Heart left ventricle (tissue), 16 donors: ENCODE measurements at regions of chr3 and their contacts with region 1.

Region 1: DNA sequence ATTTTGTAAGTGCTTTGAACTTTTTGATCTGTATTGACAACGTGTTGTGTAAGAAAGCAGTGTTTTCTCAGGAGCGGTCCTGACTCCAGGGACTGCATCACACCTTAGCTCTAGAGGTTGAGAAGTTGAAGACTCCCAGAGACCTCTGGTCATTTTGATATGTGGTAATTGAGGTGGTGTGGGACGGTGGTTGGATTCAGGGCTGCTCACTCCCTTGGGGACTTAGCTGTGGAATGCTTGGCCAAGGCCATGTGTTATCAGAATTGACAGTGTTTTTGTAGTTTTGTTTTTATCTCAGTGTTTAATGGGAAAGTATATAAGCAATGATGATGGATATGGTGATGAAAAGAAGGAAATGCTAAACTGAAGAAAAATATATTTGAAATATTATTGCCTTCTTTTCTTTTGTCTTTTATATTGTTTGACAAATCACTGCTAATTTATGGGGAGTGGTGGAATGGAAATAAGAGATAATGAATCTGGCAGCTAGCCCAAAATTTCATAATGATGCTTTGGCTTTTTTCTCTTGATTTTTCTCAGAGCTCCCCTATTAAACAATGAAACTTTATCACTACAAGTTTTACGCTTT is 16.0 kb downstream of the CMSS1 start:
- DNase-seq: no peak
- ATAC-seq: peak in 1 of 4 donors; percentile 18
- H3K4me3 ChIP-seq: no peak overlapping the region
- H3K27ac ChIP-seq: peak overlapping the region in 5 of 12 donors; percentile 5 to 37 (median 26)
- H3K4me1 ChIP-seq: peaks cover 0 to 42% (median 15%) of the 10 kb centered on the region in 12 donors
- H3K27me3 ChIP-seq: no peaks in the 10 kb centered on the region
- CTCF ChIP-seq: no peak
- POLR2A ChIP-seq: no peak

Region 2: DNA sequence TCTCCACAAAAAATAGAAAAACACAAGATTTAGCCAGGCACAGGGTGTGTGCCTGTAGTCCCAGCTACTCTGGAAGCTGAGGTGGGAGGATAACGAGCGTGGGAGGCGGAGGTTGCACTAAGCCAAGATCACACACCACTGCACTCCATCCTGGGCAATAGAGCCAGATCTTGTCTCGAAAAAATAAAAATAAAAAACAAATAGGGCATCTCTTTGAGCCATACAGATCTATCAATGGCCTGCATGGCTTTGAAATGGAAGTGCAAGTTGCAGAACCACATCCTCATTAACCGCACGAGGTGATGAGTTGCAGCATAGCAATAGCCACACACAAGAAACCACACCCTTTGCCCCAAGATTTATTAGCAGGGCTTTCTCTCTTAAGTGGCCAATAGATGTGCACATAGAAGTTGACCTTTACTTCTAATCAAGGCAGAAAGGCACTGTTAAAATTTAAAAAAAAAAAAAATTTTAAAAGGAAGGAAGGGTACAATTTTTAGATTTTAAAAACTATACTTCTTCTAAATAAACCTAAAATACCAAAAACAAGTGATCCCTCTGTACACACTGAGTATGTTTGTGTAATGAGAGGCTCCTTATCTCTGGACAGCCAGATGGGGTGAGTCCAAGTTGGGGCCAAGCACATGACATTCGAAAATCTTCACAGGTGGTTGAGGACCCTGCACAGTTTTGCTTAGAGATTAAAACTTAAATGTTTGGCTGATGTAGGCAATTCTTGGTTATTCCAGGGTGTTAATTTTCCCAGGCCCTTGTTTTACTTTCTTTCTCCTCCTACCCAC is 227.2 kb after region 1 on chr3:
- intact Hi-C with region 1: loop called in 3 of 10 experiments (anchors 5 kb)
- DNase-seq: no peak
- ATAC-seq: peak in 1 of 4 donors; percentile 36
- H3K4me3 ChIP-seq: no peak overlapping the region
- H3K27ac ChIP-seq: peak overlapping the region in 5 of 12 donors; percentile 4 to 32 (median 22)
- H3K4me1 ChIP-seq: peaks cover 0 to 33% (median 9%) of the 10 kb centered on the region in 12 donors
- H3K27me3 ChIP-seq: no peaks in the 10 kb centered on the region
- CTCF ChIP-seq: no peak
- POLR2A ChIP-seq: no peak

Region 3: DNA sequence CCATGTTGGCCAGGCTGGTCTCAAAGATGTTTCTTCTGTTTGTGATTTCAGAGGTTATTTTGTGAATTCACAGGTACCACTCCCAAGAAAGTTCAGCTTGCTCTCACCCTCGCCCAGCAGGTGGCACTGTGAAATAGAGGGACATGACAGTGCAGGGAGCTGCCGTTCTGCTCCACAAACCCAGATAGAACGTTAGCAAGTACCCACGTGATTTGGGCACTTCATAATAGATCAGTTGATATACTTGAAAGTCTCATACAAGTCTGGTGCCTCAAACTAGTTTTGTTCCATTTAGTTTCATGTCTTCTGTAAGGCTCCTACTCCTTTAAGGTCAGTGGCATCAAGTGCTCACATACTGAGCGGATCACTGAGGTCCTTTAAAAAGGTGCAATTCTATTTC is 235.1 kb after region 1 on chr3:
- intact Hi-C with region 1: loop called in 3 of 10 experiments (anchors 5 kb)
- DNase-seq: peak; percentile 80 to 87 (median 81)
- ATAC-seq: peak; percentile 73 to 91 (median 86)
- H3K4me3 ChIP-seq: no peak overlapping the region
- H3K27ac ChIP-seq: peak overlapping the region in 4 of 12 donors; percentile 14 to 60 (median 24)
- H3K4me1 ChIP-seq: peaks cover 0 to 42% (median 23%) of the 10 kb centered on the region in 12 donors
- H3K27me3 ChIP-seq: no peaks in the 10 kb centered on the region
- CTCF ChIP-seq: peak; percentile 49 to 88 (median 76)
- POLR2A ChIP-seq: no peak

Region 4: DNA sequence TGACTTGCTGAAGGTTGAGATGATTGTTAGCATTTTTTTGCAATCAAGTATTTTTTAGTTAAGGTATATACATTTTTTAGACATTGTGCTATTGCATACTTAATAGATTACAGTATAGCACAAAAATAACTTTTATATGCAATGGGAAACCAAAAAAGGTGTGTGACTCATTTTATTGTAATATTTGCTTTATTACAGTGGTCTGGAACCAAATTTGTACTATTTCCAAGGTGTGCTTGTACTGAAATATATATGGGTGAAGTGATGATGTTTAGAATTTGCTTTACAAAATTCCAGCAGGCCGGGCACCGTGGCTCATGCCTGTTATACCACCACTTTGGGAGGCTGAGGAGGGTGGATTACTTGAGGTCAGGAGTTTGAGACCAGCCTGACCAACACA is 398.0 kb after region 1 on chr3:
- intact Hi-C with region 1: no loop called
- DNase-seq: no peak
- ATAC-seq: no peak
- H3K4me3 ChIP-seq: no peak overlapping the region
- H3K27ac ChIP-seq: no peak overlapping the region
- H3K4me1 ChIP-seq: peaks cover 0 to 20% (median 7%) of the 10 kb centered on the region in 12 donors
- H3K27me3 ChIP-seq: no peaks in the 10 kb centered on the region
- CTCF ChIP-seq: no peak
- POLR2A ChIP-seq: no peak

Region 5: DNA sequence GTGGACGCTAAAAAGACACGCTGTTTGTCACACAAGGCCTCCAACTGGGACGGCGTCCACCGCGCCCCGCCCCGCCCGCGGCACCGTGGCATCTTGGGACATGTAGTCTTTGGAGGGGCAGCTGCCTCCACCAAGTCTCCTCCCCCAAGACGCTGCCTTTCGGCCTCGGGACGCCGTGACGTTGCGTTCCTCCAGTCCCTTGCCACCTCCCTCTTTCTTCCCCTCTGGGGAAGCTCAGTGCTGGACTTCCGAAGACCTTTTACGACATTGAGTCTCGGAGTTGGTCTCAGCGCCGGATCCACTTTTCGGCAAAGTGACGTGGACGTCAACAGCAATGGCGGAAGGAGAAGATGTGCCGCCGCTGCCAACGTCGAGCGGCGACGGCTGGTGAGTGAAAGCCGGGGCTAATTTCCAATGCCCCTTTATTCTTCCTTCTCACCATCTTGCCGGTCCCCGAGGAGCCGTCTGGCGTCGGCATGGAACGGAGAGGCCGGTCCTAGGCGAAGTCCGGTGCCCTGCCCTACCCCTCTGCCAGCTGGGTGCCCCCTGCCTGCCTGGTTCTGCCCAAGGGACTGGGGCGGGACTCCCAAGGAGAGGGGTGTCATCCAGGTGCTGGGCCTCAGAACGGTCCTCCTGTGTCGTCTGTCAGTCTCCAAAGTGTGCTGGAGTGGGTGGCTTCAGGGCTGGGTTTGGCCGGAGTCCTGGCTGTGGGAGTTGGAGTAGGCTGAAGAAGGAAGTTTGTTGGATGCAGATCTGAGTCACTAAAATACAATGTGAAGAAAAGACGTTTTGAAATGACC is 427.2 kb after region 1 on chr3 and contains the start of gene TBC1D23:
- intact Hi-C with region 1: loop called in 1 of 10 experiments (anchors 5 kb)
- DNase-seq: peak; percentile 99
- ATAC-seq: peak; percentile 99
- H3K4me3 ChIP-seq: peak within 1 kb of the TSS; percentile 66 to 97 (median 88)
- H3K27ac ChIP-seq: peak within 1 kb of the TSS; percentile 84 to 98 (median 92)
- H3K4me1 ChIP-seq: peaks cover 0 to 67% (median 40%) of the 10 kb centered on the region in 12 donors
- H3K27me3 ChIP-seq: no peaks in the 10 kb centered on the region
- CTCF ChIP-seq: peak in 1 of 12 donors; percentile 29
- POLR2A ChIP-seq: peak; percentile 24 to 83
- total RNA-seq, gene TBC1D23: 17.7 to 38.3 (median 32.9) TPM